Activated CD4-positive, alpha-beta T cell treated with anti-CD3 and anti-CD28 coated beads for 36 hours (primary cell): ENCODE measurements at regions of chr1 and their contacts with region 1.

Region 1: GRCh38 chr1:19209990-19210771 is at the start of gene UBR4:
- DNase-seq: peak; percentile 99
- ATAC-seq: peak; percentile 90
- H3K4me3 Mint-ChIP-seq: peak within 1 kb of the TSS; percentile 87
- H3K27ac Mint-ChIP-seq: peak within 1 kb of the TSS; percentile 97
- H3K4me1 Mint-ChIP-seq: peaks cover 68% of the 10 kb centered on the region
- H3K27me3 Mint-ChIP-seq: no peaks in the 10 kb centered on the region
- total RNA-seq, gene UBR4: 117 to 147 TPM

Region 2: GRCh38 chr1:17439250-17440073 is 1770.7 kb before region 1 on chr1 and contains the start of gene RCC2:
- CTCF ChIA-PET with region 1: no interaction called
- POLR2A ChIA-PET with region 1: no interaction called
- intact Hi-C with region 1: loop called in 1 of 2 experiments (anchors 5 kb)
- DNase-seq: peak; percentile 86
- ATAC-seq: peak; percentile 69
- H3K4me3 Mint-ChIP-seq: peak within 1 kb of the TSS; percentile 96
- H3K27ac Mint-ChIP-seq: peak within 1 kb of the TSS; percentile 96
- H3K4me1 Mint-ChIP-seq: peaks cover 45% of the 10 kb centered on the region
- H3K27me3 Mint-ChIP-seq: no peaks in the 10 kb centered on the region
- total RNA-seq, gene RCC2: 107 to 120 TPM

Region 3: GRCh38 chr1:18956369-18957135 is 253.6 kb before region 1 on chr1 and contains the start of gene IFFO2:
- CTCF ChIA-PET with region 1: no interaction called
- POLR2A ChIA-PET with region 1: no interaction called
- intact Hi-C with region 1: loop called (anchors 1 to 5 kb)
- DNase-seq: peak; percentile 99
- ATAC-seq: peak; percentile 76
- H3K4me3 Mint-ChIP-seq: peak within 1 kb of the TSS; percentile 86
- H3K27ac Mint-ChIP-seq: peak within 1 kb of the TSS; percentile 78
- H3K4me1 Mint-ChIP-seq: peaks cover 45% of the 10 kb centered on the region
- H3K27me3 Mint-ChIP-seq: peaks cover 2% of the 10 kb centered on the region
- total RNA-seq, gene IFFO2: 48.3 to 62.7 TPM

Region 4: DNA sequence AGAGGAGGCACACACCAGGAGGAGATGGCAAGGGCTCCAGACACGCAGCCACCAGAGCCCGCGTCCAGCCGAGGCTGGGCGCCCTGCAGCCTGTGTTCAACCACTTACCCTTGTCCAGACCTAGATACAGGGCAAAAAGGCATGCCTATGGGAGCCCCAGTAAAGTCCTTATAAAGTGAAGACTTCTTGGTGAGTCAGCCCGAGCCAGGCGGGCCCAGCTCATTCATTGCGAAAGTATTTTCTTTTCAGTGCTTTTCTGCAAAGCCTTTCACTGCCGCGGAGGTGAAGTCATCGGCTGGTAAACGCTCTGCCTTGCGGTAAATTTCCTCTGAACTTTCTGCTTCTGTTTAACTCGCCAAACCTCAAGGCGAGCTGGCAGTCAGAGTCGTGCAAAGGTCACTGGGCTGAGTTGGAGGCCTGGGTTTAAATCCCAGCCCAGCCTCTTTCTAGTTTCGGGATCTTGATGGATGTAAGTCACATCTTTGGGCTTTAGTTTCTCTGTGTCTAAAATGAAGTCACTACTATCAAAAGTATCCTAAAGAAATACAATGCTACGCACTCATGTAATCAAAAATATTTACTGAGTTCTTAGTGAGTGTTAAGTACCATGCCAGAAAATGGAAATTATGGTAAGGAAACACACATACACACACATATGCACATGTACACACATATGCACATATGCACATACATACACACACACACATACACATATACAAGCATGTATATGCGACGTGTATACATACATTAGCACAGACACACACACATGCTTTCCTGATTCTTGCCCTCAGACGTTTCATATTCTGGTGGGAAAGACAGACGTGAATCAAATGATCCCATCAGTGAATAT is 199.0 kb before region 1 on chr1:
- CTCF ChIA-PET with region 1: no interaction called
- POLR2A ChIA-PET with region 1: no interaction called
- intact Hi-C with region 1: loop called in 1 of 2 experiments (anchors 2 kb)
- DNase-seq: peak; percentile 93
- ATAC-seq: peak; percentile 97
- H3K4me3 Mint-ChIP-seq: peak overlapping the region; percentile 12
- H3K27ac Mint-ChIP-seq: peak overlapping the region; percentile 87
- H3K4me1 Mint-ChIP-seq: peaks cover 36% of the 10 kb centered on the region
- H3K27me3 Mint-ChIP-seq: peaks cover 2% of the 10 kb centered on the region

Region 5: DNA sequence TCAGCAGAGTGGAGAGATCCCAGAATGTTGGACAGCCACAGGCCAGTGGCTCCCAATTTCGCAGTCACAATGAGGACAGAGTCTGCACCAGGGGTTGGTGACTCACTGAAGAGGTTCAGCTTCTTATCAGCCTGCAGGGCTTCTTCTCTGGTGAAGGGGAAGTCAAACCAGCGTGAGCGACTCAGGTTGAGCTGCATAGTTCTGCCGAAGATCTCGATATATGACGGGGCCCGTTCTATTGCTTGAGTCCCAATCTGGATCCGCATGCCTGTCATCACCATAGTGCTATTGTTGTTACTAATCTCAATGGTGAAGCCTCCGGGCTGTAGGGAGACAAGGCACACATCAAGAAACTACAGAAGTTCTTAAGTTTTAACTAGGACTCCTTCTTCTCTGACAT is 58.6 kb before region 1 on chr1:
- CTCF ChIA-PET with region 1: no interaction called
- POLR2A ChIA-PET with region 1: no interaction called
- intact Hi-C with region 1: no loop called
- DNase-seq: no peak
- ATAC-seq: no peak
- H3K4me3 Mint-ChIP-seq: no peak overlapping the region
- H3K27ac Mint-ChIP-seq: no peak overlapping the region
- H3K4me1 Mint-ChIP-seq: peaks cover 2% of the 10 kb centered on the region
- H3K27me3 Mint-ChIP-seq: no peaks in the 10 kb centered on the region

Region 6: DNA sequence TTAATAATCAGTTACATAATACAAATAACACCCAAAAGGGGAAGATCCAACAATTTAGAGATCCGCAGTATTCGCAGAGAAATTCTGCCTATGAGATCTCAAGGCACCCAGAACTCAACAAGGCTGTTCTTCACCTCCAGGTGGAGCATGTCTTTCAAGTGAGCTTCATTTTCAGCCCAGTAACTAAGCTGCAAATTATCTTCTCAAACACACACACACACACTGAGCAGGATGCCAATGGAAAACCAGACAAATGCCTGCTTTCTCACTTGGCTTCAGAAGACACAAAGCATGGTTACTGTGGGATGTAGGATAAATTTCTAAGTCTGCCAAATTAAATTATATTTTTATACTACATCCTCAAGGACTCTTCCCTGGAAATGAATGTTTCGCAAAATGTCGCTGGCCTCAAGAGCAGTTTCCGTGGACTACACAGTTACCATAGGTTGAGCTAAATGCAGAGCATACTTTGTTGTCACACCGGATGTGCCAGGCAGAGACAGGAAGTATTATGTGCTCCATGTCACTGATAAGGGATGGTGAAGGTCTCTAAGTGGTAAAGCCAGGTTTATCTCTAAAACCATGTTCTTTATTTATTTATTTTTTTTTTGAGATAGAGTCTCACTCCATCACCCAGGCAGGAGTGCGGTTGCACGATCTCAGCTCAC is 30.4 kb before region 1 on chr1:
- CTCF ChIA-PET with region 1: interaction called, 8 read pairs
- POLR2A ChIA-PET with region 1: no interaction called
- intact Hi-C with region 1: loop called in 1 of 2 experiments (anchors 1 kb)
- DNase-seq: peak; percentile 43
- ATAC-seq: peak; percentile 89
- H3K4me3 Mint-ChIP-seq: no peak overlapping the region
- H3K27ac Mint-ChIP-seq: peak overlapping the region; percentile 72
- H3K4me1 Mint-ChIP-seq: peaks cover 29% of the 10 kb centered on the region
- H3K27me3 Mint-ChIP-seq: no peaks in the 10 kb centered on the region

Region 7: GRCh38 chr1:19251305-19252196 is 41.4 kb after region 1 on chr1 and contains the starts of genes EMC1 and MRTO4:
- CTCF ChIA-PET with region 1: interaction called, 6 read pairs
- POLR2A ChIA-PET with region 1: interaction called, 4 read pairs
- intact Hi-C with region 1: loop called (anchors 1 to 2 kb)
- DNase-seq: peak; percentile 94
- ATAC-seq: peak; percentile 87
- H3K4me3 Mint-ChIP-seq: peak within 1 kb of the TSS; percentile 99
- H3K27ac Mint-ChIP-seq: peak within 1 kb of the TSS; percentile 96
- H3K4me1 Mint-ChIP-seq: peaks cover 45% of the 10 kb centered on the region
- H3K27me3 Mint-ChIP-seq: no peaks in the 10 kb centered on the region
- total RNA-seq, gene EMC1: 45.0 to 59.0 TPM
- total RNA-seq, gene MRTO4: 82.6 to 95.0 TPM

Region 8: GRCh38 chr1:19485362-19486187 is 275.4 kb after region 1 on chr1 and contains the start of gene CAPZB:
- CTCF ChIA-PET with region 1: no interaction called
- POLR2A ChIA-PET with region 1: no interaction called
- intact Hi-C with region 1: loop called in 1 of 2 experiments (anchors 1 kb)
- DNase-seq: peak; percentile 98
- ATAC-seq: peak; percentile 87
- H3K4me3 Mint-ChIP-seq: peak within 1 kb of the TSS; percentile 96
- H3K27ac Mint-ChIP-seq: peak within 1 kb of the TSS; percentile 94
- H3K4me1 Mint-ChIP-seq: peaks cover 59% of the 10 kb centered on the region
- H3K27me3 Mint-ChIP-seq: no peaks in the 10 kb centered on the region
- total RNA-seq, gene CAPZB: 320 to 346 TPM